ENCODE measurements at regions of chr5 and their contacts with region 1.

Region 1: GRCh38 chr5:74927336-74927735 is 61.1 kb upstream of the FAM169A start:
- DNase-seq: no peak
- H3K4me3 ChIP-seq: no peak overlapping the region
- H3K27ac ChIP-seq: no peak overlapping the region
- H3K27me3 ChIP-seq: peaks cover 0 to 2% (median 0%) of the 10 kb centered on the region in 45 donors
- CTCF ChIP-seq: no peak

Region 2: DNA sequence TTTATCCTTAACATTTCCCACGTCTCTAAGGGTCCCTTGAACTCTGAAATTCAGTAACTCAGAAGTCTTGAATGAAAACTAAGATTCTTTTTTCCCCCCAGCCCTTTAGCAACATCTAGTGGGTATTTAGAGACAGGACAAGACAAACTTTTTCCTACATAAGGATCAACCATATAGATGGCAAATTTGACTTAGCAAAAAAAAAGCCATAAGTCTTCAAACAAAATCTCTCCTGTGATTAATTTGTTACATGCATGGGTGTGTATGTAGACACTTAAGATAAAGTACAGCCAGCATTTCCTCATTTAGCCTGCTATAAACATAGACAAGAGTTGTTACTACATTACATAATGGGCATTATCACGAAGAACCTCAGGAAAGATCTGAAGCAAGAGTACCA is 338.4 kb after region 1 on chr5:
- intact Hi-C with region 1: loop called in 1 of 2 experiments (anchors 10 kb)
- DNase-seq: no peak
- H3K4me3 ChIP-seq: no peak overlapping the region
- H3K27ac ChIP-seq: peak overlapping the region in 1 of 59 donors; percentile 40
- H3K27me3 ChIP-seq: no peaks in the 10 kb centered on the region
- CTCF ChIP-seq: peak; percentile 18 to 65 (median 44)

Measured in dorsolateral prefrontal cortex (tissue), 120 donors.